H1 (cell line): ENCODE measurements at regions of chr11 and their contacts with region 1.

Region 1: GRCh38 chr11:85590848-85591483 is 36.2 kb downstream of the DLG2 start:
- DNase-seq: no peak
- H3K4me3 ChIP-seq: no peak overlapping the region
- H3K27ac ChIP-seq: no peak overlapping the region
- H3K4me1 ChIP-seq: no peaks in the 10 kb centered on the region; a peak in 3 of 7 replicates
- H3K27me3 ChIP-seq: no peaks in the 10 kb centered on the region
- CTCF ChIP-seq: peak in 2 of 3 experiments; percentile 22 to 40; a peak in 2 of 4 replicates
- EP300 ChIP-seq: no peak
- POLR2A ChIP-seq: no peak
- RAD21 ChIP-seq: peak; percentile 75 to 79

Region 2: GRCh38 chr11:84720706-84721402 is 870.1 kb before region 1 on chr11:
- CTCF ChIA-PET with region 1: interaction called, 12 read pairs
- POLR2A ChIA-PET with region 1: no interaction called
- DNase-seq: peak in 1 of 2 experiments; percentile 77
- H3K4me3 ChIP-seq: peak overlapping the region; percentile 54 to 77 (median 68)
- H3K27ac ChIP-seq: no peak overlapping the region
- H3K4me1 ChIP-seq: peaks cover 3 to 6% (median 5%) of the 10 kb centered on the region in 4 experiments; a peak in 5 of 7 replicates
- H3K27me3 ChIP-seq: peaks cover 0 to 11% (median 2%) of the 10 kb centered on the region in 4 experiments; a peak in 4 of 7 replicates
- CTCF ChIP-seq: no peak
- EP300 ChIP-seq: no peak
- POLR2A ChIP-seq: no peak
- RAD21 ChIP-seq: no peak

Region 3: DNA sequence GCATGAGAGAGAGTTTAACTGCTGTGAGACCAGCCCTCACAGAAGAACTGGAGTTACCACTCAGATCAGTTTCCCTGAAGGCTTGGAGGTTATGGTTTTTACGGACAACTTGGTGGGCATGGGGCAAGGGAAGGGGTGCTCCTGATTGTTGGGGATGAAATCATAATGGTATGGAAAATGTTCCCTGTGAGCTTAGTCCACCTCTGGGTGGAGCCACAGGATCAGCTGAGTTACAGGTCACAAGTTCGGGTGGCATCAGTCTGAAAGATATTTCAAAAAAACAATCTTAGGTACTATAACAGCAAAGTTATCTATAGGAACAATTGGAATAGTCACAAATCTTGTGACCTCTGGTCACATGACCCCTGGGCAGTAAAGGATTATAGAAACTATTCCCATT is 126.7 kb before region 1 on chr11:
- CTCF ChIA-PET with region 1: interaction called, 56 read pairs
- POLR2A ChIA-PET with region 1: no interaction called
- DNase-seq: no peak
- H3K4me3 ChIP-seq: no peak overlapping the region
- H3K27ac ChIP-seq: no peak overlapping the region
- H3K4me1 ChIP-seq: no peaks in the 10 kb centered on the region; a peak in 1 of 7 replicates
- H3K27me3 ChIP-seq: no peaks in the 10 kb centered on the region
- CTCF ChIP-seq: peak; percentile 47 to 72 (median 67)
- EP300 ChIP-seq: no peak
- POLR2A ChIP-seq: no peak
- RAD21 ChIP-seq: peak; percentile 88 to 91

Region 4: DNA sequence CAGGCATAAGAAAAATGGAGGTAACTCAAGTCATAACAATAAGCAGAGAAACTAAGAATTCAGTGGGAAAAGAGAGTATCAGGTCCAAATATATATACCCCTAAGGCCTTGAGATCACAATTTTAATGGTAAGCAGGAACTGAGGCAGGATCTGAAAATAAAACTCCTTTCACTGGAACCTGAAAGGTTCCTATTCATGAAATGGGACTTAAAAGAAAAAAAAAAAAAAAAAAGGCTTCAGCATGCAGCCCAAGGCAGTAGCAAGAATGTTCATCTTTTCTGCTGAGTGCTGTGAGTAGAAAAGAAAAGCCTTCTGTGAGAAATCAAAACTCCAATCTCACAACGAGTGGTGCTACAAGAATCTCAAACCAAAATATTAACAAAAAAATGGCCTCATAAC is 39.1 kb before region 1 on chr11:
- CTCF ChIA-PET with region 1: no interaction called
- POLR2A ChIA-PET with region 1: no interaction called
- DNase-seq: no peak
- H3K4me3 ChIP-seq: no peak overlapping the region
- H3K27ac ChIP-seq: no peak overlapping the region
- H3K4me1 ChIP-seq: no peaks in the 10 kb centered on the region; a peak in 1 of 7 replicates
- H3K27me3 ChIP-seq: no peaks in the 10 kb centered on the region
- CTCF ChIP-seq: no peak
- EP300 ChIP-seq: no peak
- POLR2A ChIP-seq: no peak
- RAD21 ChIP-seq: no peak

Region 5: DNA sequence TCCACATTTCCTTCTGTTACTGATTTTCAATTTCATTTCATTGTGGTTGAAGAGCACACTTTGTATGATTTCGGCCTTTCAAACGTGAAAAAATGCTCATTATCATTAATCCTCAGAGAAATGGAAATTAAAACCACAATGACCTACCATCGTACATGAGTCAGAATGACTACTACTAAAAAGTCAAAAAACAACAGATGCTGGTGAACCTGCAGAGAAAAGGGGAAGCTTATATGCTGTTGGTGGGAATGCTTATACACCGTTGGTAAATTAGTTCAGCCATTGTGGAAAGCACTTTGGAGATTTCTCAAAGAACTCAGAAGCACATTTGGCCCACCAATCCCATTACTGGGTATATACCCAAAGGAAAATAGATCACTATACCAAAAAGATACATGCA is 21.4 kb before region 1 on chr11:
- CTCF ChIA-PET with region 1: no interaction called
- POLR2A ChIA-PET with region 1: no interaction called
- DNase-seq: no peak
- H3K4me3 ChIP-seq: no peak overlapping the region
- H3K27ac ChIP-seq: no peak overlapping the region
- H3K4me1 ChIP-seq: no peaks in the 10 kb centered on the region; a peak in 1 of 7 replicates
- H3K27me3 ChIP-seq: no peaks in the 10 kb centered on the region
- CTCF ChIP-seq: no peak
- EP300 ChIP-seq: no peak
- POLR2A ChIP-seq: no peak
- RAD21 ChIP-seq: no peak